Prostate gland (tissue), 2 donors: ENCODE measurements at regions of chr19 and their contacts with region 1.

Region 1: GRCh38 chr19:46265217-46265828 is 31.5 kb upstream of the HIF3A start:
- DNase-seq: peak; percentile 72
- H3K4me3 ChIP-seq: no peak overlapping the region
- H3K27ac ChIP-seq: no peak overlapping the region
- H3K4me1 ChIP-seq: no peaks in the 10 kb centered on the region
- H3K27me3 ChIP-seq: peaks cover 2% of the 10 kb centered on the region
- CTCF ChIP-seq: peak; percentile 56 to 93 (median 88)
- POLR2A ChIP-seq: no peak

Region 2: DNA sequence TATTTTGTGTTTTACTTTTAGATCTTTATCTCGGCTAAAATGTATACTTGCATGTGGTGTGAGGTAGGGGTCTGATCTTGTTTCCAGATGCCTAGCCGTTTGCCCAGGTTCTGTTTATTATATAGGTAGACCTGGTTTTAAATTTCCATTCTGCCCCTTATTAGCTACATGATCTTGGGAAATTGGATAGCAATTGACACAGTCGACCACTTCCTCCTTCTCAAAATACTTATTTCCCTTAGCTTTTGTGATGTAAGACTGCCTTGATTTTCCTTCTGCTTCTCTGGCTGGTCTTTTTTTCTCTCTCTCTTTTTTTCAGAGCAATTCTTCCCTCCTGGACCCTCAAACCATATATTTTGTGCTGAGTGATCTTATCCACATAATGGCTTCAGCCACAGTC is 239.5 kb before region 1 on chr19:
- intact Hi-C with region 1: loop called (anchors 5 kb)
- DNase-seq: no peak
- H3K4me3 ChIP-seq: no peak overlapping the region
- H3K27ac ChIP-seq: no peak overlapping the region
- H3K4me1 ChIP-seq: no peaks in the 10 kb centered on the region
- H3K27me3 ChIP-seq: no peaks in the 10 kb centered on the region
- CTCF ChIP-seq: no peak
- POLR2A ChIP-seq: no peak

Region 3: DNA sequence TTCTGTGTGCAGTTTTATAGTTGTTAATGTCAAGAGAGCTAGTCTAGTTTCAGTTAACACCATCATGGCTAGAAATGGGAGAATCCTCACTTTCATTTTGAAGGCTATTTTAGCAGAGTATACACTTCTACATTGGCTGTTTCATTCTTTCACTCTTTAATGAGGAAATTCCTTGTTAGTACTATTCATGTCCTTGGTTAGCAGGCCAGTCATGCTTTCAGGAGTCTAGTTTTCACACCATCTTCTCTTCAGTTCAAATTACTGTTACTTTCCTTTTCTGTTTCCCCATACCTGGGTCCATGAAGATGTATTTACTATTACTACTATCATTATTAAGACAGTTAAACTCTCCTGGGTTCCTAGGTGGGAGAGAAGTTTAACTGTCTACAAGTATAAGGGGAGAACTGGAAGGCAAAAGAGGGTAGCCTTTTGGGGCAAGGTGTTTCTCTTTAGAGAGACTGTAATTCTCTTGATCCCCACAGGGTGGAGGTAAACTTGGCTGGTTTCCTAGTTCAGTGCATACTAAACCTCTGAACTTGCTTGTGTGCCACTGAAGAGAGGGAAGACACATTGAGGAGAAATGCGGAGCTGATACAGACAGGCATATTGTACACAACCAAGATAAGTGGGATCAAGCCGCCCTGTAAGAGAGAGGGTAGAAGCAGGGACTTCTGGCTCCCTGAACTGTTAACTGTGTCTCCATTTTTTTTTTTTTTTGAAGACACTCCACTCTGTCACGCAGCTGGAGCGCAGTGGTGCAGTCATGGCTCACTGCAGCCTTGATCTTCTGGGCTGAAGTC is 183.2 kb before region 1 on chr19:
- intact Hi-C with region 1: loop called (anchors 2 kb)
- DNase-seq: peak; percentile 25
- H3K4me3 ChIP-seq: no peak overlapping the region
- H3K27ac ChIP-seq: no peak overlapping the region
- H3K4me1 ChIP-seq: no peaks in the 10 kb centered on the region
- H3K27me3 ChIP-seq: no peaks in the 10 kb centered on the region
- CTCF ChIP-seq: peak; percentile 33 to 81 (median 74)
- POLR2A ChIP-seq: no peak